Left colon (tissue), 2 donors: ENCODE measurements at regions of chr5 and their contacts with region 1.

Region 1: GRCh38 chr5:72366324-72366976 is 46.3 kb downstream of the PTCD2 start:
- DNase-seq: peak; percentile 54 to 73
- ATAC-seq: peak; percentile 99

Region 2: DNA sequence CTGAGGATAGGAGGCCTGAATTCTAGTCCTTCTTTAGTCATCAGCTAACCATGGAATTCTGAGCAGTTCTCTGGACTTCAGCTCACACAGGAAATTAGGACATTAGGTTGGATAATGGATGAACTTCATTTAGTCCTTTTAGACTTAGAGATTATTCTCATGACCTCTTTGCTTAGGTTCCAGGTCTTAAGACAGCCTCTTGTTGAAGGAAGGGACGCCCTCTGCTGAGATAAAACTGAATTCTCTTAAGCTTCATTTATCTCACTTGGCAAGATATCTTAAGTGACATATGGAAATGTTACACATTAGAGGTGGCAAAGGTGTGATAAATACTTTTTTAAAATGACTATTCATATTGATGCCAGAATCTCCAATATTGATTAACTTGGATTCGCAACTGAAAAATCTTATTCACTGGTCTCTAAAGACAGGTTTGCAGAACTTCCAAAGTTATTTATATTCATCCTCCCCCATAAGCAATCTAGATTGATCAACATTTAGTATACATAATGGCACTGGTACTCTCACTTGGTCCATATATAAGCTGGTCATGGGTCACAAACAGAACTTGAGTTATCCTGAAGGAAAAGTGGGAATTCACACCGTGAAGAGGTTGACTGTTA is 157.6 kb after region 1 on chr5:
- intact Hi-C with region 1: loop called (anchors 5 to 10 kb)
- DNase-seq: no peak
- ATAC-seq: peak; percentile 88

Region 3: DNA sequence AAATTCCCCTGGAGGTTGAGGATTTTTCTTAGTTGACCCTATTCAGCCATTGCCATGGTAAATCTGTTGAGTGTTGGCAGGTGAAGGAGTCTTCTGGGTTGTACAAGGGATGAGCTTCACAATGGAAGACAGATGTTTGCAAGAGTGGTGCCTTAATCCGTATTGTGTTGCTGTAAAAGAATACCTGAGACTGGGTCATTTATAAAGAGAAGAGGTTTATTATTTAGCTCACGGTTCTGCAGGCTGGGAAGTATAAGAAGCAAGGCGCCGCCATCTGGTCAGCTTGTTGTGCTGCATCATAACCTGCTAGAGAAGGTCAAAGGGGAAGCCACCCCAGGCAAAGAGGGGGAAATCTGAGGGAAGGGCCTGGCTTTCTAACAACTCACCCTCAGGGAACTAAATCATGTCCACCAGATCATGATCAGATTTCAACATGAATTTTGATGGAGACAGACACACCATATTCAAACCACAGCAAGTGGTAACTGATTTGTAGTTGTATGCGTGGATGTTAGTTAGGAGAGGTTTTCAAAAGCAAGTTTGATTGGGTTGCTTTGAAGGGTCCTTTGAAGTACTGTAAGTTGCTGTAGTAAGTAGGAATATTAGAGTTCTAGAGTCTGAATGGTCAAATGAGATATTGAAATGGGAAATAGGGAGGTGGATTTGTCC is 452.6 kb after region 1 on chr5:
- intact Hi-C with region 1: loop called in 1 of 2 experiments (anchors 10 kb)
- DNase-seq: peak; percentile 60 to 82
- ATAC-seq: no peak